ENCODE measurements at regions of chr16 and their contacts with region 1.

Region 1: DNA sequence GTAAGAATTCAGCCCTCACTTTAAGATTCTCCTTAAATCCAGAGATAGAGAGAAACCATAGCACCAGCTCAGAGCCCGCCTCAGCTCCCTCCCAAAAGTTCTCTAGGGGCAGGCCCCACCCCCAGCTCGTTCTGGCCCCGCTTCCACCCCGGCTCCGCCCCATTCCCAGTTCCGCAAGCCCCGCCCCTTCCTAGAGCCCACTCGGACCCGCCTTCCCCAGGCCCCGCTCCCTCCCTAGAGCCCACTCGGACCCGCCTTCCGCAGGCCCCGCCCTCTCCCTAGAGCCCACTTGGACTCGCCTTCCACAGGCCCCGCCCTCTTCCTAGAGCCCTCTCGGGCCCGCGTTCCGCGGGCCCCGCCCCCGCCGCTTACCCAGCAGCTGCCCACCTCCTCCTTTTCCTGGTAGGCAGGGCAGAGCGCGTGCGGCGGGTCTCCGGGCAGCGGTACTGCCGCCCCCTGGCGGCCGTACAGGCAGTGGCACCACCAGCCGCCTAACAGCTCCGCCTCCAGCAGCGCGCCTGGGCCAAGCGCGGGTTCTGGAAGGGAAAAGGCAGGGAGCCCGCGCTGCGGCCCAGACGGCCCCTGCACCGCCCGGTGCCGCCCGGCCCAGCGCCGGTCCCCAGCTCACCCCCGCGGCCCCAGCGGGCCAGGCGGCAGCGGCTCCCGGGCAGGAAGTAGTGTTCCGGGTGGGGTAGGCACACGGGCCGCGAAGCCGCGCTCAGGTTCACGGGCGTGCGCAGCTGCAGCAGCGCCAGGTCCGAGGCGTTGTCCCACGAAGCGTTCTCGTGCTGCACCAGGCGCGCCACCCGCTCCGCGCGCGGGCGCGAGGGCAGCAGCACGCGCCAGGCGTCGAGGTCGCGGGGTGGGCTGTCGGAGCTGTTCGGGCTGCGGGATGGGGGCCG is 6.8 kb upstream of the PRSS8 start:
- DNase-seq: peak; percentile 98
- H3K4me3 Mint-ChIP-seq: peak overlapping the region; percentile 69
- H3K27ac Mint-ChIP-seq: peak overlapping the region; percentile 86
- H3K4me1 Mint-ChIP-seq: peaks cover 27% of the 10 kb centered on the region
- H3K27me3 Mint-ChIP-seq: peaks cover 2% of the 10 kb centered on the region

Region 2: GRCh38 chr16:30747799-30748634 is 394.3 kb before region 1 on chr16 and contains the start of gene PHKG2:
- CTCF ChIA-PET with region 1: no interaction called
- POLR2A ChIA-PET with region 1: no interaction called
- DNase-seq: peak; percentile 99
- H3K4me3 Mint-ChIP-seq: peak within 1 kb of the TSS; percentile 90
- H3K27ac Mint-ChIP-seq: peak within 1 kb of the TSS; percentile 86
- H3K4me1 Mint-ChIP-seq: peaks cover 31% of the 10 kb centered on the region
- H3K27me3 Mint-ChIP-seq: no peaks in the 10 kb centered on the region
- total RNA-seq, gene PHKG2: 41.1 to 43.4 TPM

Region 3: DNA sequence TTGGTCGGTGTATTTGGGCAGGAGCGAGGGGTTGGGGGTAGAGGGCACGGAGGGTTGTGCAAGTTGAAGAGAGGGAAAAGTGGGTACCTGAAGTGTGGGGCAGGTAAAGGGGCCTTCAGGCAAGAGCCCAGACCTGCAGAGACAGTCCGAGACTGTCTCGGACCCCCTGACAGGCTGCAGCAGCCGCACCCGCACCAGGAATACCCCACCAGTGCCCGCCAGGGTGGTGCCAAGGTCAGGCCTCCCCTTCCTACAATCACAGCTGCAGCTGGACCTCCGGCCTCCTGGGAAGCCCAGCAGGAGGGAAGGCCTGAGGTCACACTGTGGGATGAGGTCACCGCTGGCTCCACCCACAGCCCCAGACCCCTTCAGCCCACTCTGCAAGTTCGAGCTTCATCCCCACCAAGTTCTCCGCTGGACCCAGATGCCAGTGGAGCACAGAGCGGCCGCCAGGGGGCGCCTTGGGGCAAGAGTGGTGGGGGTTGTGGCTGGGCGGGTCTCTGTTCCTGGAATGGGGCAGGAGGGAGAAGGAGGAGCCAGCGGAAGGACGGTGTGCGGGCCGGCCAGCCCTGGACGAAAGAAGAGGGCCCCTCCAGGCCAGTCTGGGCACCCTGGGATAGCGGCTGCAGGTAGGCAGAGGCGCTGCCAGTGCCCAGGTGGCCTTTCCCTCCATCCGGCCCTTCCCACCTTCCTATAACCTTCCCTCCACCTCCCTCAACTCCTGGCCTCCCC is 157.5 kb before region 1 on chr16 and contains the start of gene HSD3B7:
- CTCF ChIA-PET with region 1: interaction called, 23 read pairs
- POLR2A ChIA-PET with region 1: no interaction called
- DNase-seq: peak; percentile 83
- H3K4me3 Mint-ChIP-seq: peak within 1 kb of the TSS; percentile 36
- H3K27ac Mint-ChIP-seq: peak within 1 kb of the TSS; percentile 54
- H3K4me1 Mint-ChIP-seq: peaks cover 9% of the 10 kb centered on the region
- H3K27me3 Mint-ChIP-seq: no peaks in the 10 kb centered on the region
- total RNA-seq, gene HSD3B7: 3.4 to 3.5 TPM

Region 4: GRCh38 chr16:31073968-31074813 is 68.2 kb before region 1 on chr16 and contains the starts of genes ZNF646 and ZNF668:
- CTCF ChIA-PET with region 1: interaction called, 14 read pairs
- POLR2A ChIA-PET with region 1: no interaction called
- DNase-seq: peak; percentile 99
- H3K4me3 Mint-ChIP-seq: peak within 1 kb of the TSS; percentile 91
- H3K27ac Mint-ChIP-seq: peak within 1 kb of the TSS; percentile 94
- H3K4me1 Mint-ChIP-seq: peaks cover 30% of the 10 kb centered on the region
- H3K27me3 Mint-ChIP-seq: no peaks in the 10 kb centered on the region
- total RNA-seq, gene ZNF646: 28.3 to 33.3 TPM
- total RNA-seq, gene ZNF668: 11.2 to 12.9 TPM

Region 5: GRCh38 chr16:31117391-31118197 is 24.8 kb before region 1 on chr16 and contains the start of gene KAT8:
- CTCF ChIA-PET with region 1: interaction called, 33 read pairs
- POLR2A ChIA-PET with region 1: interaction called, 5 read pairs
- DNase-seq: peak; percentile 99
- H3K4me3 Mint-ChIP-seq: peak within 1 kb of the TSS; percentile 80
- H3K27ac Mint-ChIP-seq: peak within 1 kb of the TSS; percentile 93
- H3K4me1 Mint-ChIP-seq: peaks cover 34% of the 10 kb centered on the region
- H3K27me3 Mint-ChIP-seq: no peaks in the 10 kb centered on the region
- total RNA-seq, gene KAT8: 63.4 to 67.7 TPM

Region 6: GRCh38 chr16:31157136-31157535 is 14.8 kb after region 1 on chr16:
- CTCF ChIA-PET with region 1: interaction called, 33 read pairs
- POLR2A ChIA-PET with region 1: interaction called, 4 read pairs
- DNase-seq: no peak
- H3K4me3 Mint-ChIP-seq: peak overlapping the region; percentile 11
- H3K27ac Mint-ChIP-seq: no peak overlapping the region
- H3K4me1 Mint-ChIP-seq: peaks cover 12% of the 10 kb centered on the region
- H3K27me3 Mint-ChIP-seq: peaks cover 11% of the 10 kb centered on the region

Region 7: DNA sequence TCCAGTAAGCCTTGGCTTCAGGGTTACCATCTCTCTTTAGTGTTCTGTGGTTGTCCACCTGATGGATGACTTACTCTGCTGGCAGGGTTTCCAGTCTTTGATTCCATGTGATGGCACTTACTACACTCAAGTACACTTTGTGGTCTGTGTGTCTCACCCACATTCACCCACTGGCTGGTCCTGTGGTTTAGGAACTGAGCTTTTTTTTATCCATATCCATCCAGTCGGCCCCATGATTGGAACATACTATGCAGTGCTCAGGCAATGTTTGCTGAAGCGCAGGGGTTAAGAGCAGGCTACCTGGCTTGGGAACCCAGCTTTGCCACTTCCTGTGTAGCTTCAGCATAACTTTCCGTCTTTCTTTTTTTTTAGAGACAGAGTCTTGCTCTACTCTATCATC is 34.8 kb after region 1 on chr16:
- CTCF ChIA-PET with region 1: interaction called, 20 read pairs
- POLR2A ChIA-PET with region 1: interaction called, 9 read pairs
- DNase-seq: peak; percentile 74
- H3K4me3 Mint-ChIP-seq: peak overlapping the region; percentile 63
- H3K27ac Mint-ChIP-seq: peak overlapping the region; percentile 99
- H3K4me1 Mint-ChIP-seq: peaks cover 25% of the 10 kb centered on the region
- H3K27me3 Mint-ChIP-seq: no peaks in the 10 kb centered on the region

Region 8: GRCh38 chr16:31572821-31573220 is 430.5 kb after region 1 on chr16:
- CTCF ChIA-PET with region 1: no interaction called
- POLR2A ChIA-PET with region 1: no interaction called
- DNase-seq: no peak
- H3K4me3 Mint-ChIP-seq: no peak overlapping the region
- H3K27ac Mint-ChIP-seq: no peak overlapping the region
- H3K4me1 Mint-ChIP-seq: peaks cover 5% of the 10 kb centered on the region
- H3K27me3 Mint-ChIP-seq: peaks cover 41% of the 10 kb centered on the region

Measured in activated CD4-positive, alpha-beta T cell treated with anti-CD3 and anti-CD28 coated beads, Interleukin-2, amount 10 ng/mL, durations not matched to agents 7 days and 5 days (primary cell).